Left colon (tissue), 2 donors: ENCODE measurements at regions of chr6 and their contacts with region 1.

Region 1: DNA sequence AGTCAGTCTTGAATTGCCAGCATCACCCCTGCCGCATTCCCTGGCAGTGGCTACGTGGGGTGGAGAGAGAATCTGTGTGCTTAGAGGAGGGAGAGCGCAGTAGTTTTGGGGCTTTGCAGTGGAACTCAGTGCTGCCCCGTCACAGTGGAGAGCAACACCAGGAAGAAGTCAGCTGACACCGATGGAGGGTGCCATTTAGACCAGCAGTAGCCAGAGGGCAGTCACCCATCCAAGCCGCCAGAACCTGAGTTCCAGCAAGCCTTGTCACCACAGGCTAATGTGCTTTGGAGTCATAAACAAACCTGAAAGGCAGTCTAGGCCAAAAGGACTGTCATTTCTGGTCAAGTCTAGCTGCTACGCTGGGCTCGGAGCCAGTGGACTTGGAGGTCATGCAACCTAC is 22.0 kb upstream of the PERP start:
- DNase-seq: no peak
- ATAC-seq: no peak

Region 2: GRCh38 chr6:137827977-137828810 is 301.0 kb before region 1 on chr6:
- intact Hi-C with region 1: no loop called
- DNase-seq: no peak
- ATAC-seq: no peak

Region 3: GRCh38 chr6:137873273-137873762 is 255.9 kb before region 1 on chr6:
- intact Hi-C with region 1: no loop called
- DNase-seq: peak; percentile 73 to 94
- ATAC-seq: peak; percentile 93

Region 4: GRCh38 chr6:138393871-138394783 is 264.9 kb after region 1 on chr6:
- intact Hi-C with region 1: loop called in 1 of 2 experiments (anchors 10 kb)
- DNase-seq: no peak
- ATAC-seq: no peak

Region 5: GRCh38 chr6:138662471-138662870 is 533.3 kb after region 1 on chr6:
- intact Hi-C with region 1: no loop called
- DNase-seq: no peak
- ATAC-seq: no peak